Prostate gland (tissue), 2 donors: ENCODE measurements at regions of chr22 and their contacts with region 1.

Region 1: GRCh38 chr22:25045159-25045558 is 92.6 kb downstream of the KIAA1671 start:
- DNase-seq: no peak
- H3K4me3 ChIP-seq: no peak overlapping the region
- H3K27ac ChIP-seq: no peak overlapping the region
- H3K4me1 ChIP-seq: no peaks in the 10 kb centered on the region
- H3K27me3 ChIP-seq: no peaks in the 10 kb centered on the region
- CTCF ChIP-seq: no peak
- POLR2A ChIP-seq: no peak

Region 2: DNA sequence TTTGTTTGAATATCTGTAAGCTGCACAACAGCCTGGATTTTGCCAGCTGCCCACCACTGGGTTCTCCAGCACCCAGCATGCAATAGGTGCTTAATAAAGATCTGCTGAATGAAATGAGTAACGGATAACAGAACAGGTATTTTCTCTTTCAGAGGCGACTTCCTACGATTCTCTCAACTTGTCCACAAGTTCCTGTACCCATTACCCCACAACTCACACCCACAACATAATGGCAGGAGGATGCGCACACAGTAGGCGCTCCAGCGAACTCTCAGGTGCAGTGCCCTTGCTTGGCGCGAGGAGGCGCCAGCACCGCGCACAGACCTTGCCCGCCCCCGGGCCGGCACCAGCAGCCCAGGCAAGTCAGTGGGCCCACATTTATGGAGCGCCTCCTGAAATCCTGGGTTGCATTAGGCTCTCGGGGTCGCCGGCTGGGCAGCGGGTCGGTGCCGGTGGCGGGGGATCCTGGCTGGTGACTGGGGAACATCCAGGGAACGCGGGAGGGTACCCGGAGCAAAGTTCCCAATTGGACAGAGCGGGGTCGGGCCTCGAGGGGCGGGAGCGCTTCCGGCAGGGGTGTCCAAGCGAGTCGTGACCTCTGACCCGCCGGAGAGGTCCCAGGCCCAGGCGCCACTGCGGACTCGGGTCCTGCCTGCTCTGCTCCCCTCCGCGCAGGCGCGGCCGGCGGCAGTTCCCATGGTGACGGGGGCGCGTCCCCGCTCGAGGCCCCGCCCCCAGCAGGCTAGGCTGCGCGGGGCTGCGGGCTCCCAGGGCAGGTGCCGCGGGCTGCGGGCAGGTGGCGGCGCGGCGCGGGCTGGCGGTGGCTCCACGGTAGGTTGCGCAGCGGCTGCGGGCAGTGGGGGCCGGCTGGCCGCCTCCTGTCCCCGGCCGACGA is 93.0 kb before region 1 on chr22 and contains the start of gene KIAA1671:
- intact Hi-C with region 1: loop called (anchors 2 kb)
- DNase-seq: peak; percentile 84
- H3K4me3 ChIP-seq: peak within 1 kb of the TSS; percentile 69 to 73
- H3K27ac ChIP-seq: peak within 1 kb of the TSS; percentile 87
- H3K4me1 ChIP-seq: peaks cover 8% of the 10 kb centered on the region
- H3K27me3 ChIP-seq: no peaks in the 10 kb centered on the region
- CTCF ChIP-seq: peak; percentile 90 to 99 (median 96)
- POLR2A ChIP-seq: peak; percentile 92
- total RNA-seq, gene KIAA1671: 44.8 to 53.1 TPM

Region 3: GRCh38 chr22:25110846-25111578 is 65.9 kb after region 1 on chr22:
- intact Hi-C with region 1: no loop called
- DNase-seq: peak; percentile 88
- H3K4me3 ChIP-seq: peak overlapping the region; percentile 45 to 50
- H3K27ac ChIP-seq: peak overlapping the region; percentile 81 to 82
- H3K4me1 ChIP-seq: peaks cover 3% of the 10 kb centered on the region
- H3K27me3 ChIP-seq: no peaks in the 10 kb centered on the region
- CTCF ChIP-seq: peak; percentile 27 to 66 (median 59)
- POLR2A ChIP-seq: no peak